Activated T-helper 2 cell treated with anti-CD3 and anti-CD28 coated beads, Interferon-gamma antibody, Interleukin-2, Interleukin-4, amounts not matched to agents 10 μg/mL and 5 μg/mL and 100 μg/mL, durations not matched to agents 14 hours and 24 hours and 36 hours (primary cell): ENCODE measurements at regions of chr10 and their contacts with region 1.

Region 1: DNA sequence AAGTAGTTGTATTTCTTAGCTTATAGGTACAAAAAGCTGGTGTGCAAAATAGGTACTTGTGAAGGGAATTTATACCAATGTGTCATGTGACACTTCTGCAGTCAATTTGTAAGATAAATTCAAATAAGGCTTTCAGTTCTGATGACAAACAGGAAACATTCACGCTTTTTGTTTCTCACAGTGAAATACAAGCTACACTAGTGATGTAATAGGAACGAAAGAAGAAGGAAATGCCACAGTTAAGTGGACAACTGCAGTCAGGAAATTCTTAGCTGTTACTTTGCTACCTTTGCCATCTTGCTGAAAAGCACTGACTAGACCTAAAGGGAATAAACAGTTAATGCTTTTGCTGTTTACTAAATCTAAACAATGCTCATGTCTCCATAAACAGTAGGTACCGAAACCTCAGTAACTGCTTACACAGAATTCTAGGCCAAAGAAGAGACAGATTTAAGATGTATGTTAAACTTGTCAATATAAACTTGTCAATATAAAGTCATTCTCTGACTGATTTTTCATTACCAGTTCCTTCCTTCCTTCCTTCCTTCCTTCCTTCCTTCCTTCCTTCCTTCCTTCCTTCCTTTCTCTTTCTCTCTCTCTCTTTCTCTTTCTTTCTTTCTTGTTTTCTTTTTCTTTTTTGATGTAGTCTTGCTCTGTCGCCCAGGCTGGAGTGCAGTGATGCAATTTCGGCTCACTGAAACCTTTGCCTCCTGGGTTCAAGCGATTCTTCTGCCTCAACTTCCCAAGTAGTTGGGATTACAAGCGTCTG is 10.1 kb downstream of the OTUD1 start:
- DNase-seq: no peak
- H3K4me3 Mint-ChIP-seq: no peak overlapping the region
- H3K27ac Mint-ChIP-seq: peak overlapping the region; percentile 74
- H3K4me1 Mint-ChIP-seq: peaks cover 33% of the 10 kb centered on the region
- H3K27me3 Mint-ChIP-seq: no peaks in the 10 kb centered on the region

Region 2: DNA sequence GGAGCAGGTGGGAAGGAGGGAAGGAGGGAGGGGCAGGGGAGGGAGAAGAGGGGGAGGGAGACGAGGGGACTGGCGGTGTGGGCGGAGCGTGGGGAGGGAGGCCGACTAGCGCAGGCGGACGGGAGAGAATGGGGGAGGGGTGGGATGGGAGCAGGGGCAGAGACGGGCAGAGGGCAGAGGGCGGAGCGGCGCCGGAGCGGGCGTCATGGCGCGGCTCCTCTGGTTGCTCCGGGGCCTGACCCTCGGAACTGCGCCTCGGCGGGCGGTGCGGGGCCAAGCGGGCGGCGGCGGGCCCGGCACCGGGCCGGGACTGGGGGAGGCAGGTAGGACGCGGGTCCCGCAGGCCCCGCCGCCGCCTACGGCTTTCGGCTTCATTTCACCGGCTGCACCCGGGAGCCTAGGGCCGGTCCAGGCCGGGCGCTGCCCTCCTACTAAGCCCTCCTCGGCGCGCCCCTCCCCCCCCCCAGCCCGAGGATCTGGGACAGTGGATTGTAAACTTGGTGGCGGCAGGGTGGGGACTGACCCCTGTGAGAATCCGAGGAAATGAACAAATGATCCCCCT is 353.5 kb before region 1 on chr10 and contains the start of gene MSRB2:
- intact Hi-C with region 1: loop called (anchors 2 kb)
- DNase-seq: peak; percentile 66
- H3K4me3 Mint-ChIP-seq: peak within 1 kb of the TSS; percentile 88
- H3K27ac Mint-ChIP-seq: peak within 1 kb of the TSS; percentile 83
- H3K4me1 Mint-ChIP-seq: peaks cover 41% of the 10 kb centered on the region
- H3K27me3 Mint-ChIP-seq: peaks cover 17% of the 10 kb centered on the region
- total RNA-seq, gene MSRB2: 4.0 and 4.4 TPM in 2 replicates

Region 3: DNA sequence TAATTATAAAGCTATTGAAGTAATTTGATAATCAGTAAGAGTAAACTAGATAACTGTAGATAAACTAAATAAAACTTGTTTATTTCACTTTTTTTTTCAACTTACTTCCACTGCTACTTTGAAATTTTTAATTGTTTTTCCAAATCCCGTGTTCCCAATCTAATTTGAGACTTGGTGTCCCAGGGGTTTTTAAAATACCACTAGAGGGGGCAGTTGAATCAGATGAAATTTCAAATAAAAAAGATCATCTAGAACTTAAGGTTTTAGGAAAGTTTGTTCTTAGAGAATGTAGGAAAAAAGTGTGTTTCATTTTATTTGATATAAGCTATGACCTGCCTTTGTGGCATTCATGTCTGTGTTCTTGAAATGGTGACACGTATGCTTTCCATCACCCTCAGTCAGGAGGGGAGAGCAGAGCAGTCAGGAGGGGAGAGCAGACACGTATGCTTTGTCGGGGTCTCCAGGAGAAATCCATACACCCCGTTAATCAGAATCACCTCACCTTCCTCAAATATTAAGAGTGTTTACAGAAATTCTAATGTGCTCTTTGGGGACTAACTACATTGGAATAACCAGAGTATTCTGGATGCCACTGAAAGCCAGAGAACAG is 154.2 kb before region 1 on chr10:
- intact Hi-C with region 1: no loop called
- DNase-seq: no peak
- H3K4me3 Mint-ChIP-seq: no peak overlapping the region
- H3K27ac Mint-ChIP-seq: no peak overlapping the region
- H3K4me1 Mint-ChIP-seq: no peaks in the 10 kb centered on the region
- H3K27me3 Mint-ChIP-seq: peaks cover 12% of the 10 kb centered on the region

Region 4: DNA sequence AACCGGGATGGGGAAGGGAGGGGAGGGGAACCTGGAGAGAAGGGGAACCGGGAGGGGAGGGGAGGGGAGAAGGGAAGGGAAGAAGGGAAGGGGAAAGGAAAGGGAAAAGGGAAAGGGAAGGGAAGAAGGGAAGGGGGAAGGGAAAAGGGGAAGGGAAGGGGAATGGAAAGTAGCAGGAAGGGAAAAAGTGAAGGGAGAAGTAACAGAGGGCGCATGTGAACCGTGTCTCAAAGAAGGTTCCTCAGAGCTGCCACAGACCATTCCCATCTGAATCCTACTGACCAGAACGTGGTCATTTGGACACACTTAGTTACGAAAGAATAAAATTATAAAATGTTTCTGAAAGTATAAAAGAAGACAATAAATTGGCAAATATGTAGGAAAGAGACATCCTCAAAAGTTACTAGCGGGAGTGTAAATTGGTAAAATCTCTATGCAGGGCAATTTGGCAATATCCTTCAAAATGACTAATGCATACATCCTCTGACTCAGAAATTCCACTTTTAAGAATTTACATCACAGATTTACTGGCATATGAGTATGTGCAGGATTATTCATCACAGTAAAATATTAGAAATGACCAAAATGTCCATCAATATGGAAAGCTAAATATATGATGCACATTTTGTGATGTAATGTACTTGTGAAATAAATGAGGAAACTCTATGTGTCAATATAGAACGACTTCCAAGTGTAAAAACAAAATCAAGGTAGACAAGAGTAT is 117.3 kb before region 1 on chr10:
- intact Hi-C with region 1: loop called (anchors 5 kb)
- DNase-seq: no peak
- H3K4me3 Mint-ChIP-seq: no peak overlapping the region
- H3K27ac Mint-ChIP-seq: peak overlapping the region; percentile 49
- H3K4me1 Mint-ChIP-seq: peaks cover 17% of the 10 kb centered on the region
- H3K27me3 Mint-ChIP-seq: peaks cover 3% of the 10 kb centered on the region

Region 5: DNA sequence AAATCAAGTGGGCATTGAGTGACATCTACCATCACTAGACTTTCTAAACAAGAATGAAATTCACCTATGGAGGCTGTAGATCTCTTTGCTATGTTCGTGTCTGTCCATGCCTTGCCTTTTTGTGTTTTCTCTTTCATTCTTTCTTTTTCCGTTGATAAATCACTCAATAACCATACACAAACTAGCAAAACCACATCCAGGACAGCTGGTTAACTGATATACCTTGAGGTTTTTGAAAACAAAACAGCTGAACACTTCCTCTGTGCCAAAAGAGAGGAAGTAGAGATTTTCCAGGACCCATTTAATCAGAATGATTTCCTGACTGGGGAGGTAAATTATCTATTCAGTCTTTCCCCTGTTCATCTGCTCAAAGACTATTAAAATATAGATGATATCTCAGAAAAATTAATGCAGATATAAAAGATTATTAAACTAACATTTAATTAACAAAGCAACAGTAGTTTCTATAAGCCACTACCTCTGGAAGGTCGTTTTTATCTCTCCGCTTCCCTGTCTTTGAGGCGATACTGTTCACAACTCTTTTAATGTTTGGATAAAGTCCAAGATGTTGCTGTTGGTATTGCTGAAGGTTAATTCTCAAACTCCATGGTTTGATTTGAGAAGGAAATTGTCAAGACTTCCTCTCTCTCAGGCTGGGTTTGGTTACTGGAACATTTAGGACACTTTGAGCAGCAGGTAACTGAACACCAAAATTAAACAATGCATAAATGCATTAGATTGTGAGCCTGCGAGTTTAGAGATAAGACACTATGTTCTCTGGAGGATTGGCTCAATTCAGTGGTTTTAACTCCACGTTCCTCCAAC is 80.0 kb before region 1 on chr10:
- intact Hi-C with region 1: loop called (anchors 2 kb)
- DNase-seq: peak; percentile 16
- H3K4me3 Mint-ChIP-seq: peak overlapping the region; percentile 53
- H3K27ac Mint-ChIP-seq: peak overlapping the region; percentile 60
- H3K4me1 Mint-ChIP-seq: peaks cover 55% of the 10 kb centered on the region
- H3K27me3 Mint-ChIP-seq: no peaks in the 10 kb centered on the region

Region 6: DNA sequence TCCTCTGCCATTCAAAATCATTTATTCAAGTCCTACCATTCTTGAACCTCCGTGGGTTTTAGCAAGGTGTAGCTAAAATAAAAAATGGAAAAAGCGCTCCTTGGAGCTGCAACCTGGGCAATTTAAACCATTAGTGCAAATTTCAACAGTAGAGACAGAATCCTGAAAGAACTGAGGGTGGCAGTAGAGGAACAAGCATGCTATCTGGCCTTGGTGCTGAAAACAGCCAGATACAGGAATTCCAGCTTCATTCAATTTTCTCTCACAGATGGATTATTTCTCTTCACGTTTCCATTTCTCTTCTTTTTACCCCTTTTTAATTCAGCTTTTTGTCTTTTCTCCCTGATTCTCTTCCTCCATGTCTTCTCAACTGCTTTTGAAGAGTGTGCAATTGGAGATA is 67.5 kb after region 1 on chr10:
- intact Hi-C with region 1: loop called (anchors 5 kb)
- DNase-seq: no peak
- H3K4me3 Mint-ChIP-seq: no peak overlapping the region
- H3K27ac Mint-ChIP-seq: no peak overlapping the region
- H3K4me1 Mint-ChIP-seq: peaks cover 20% of the 10 kb centered on the region
- H3K27me3 Mint-ChIP-seq: peaks cover 25% of the 10 kb centered on the region

Region 7: GRCh38 chr10:23530079-23530478 is 81.1 kb after region 1 on chr10:
- intact Hi-C with region 1: loop called (anchors 5 kb)
- DNase-seq: no peak
- H3K4me3 Mint-ChIP-seq: no peak overlapping the region
- H3K27ac Mint-ChIP-seq: no peak overlapping the region
- H3K4me1 Mint-ChIP-seq: peaks cover 16% of the 10 kb centered on the region
- H3K27me3 Mint-ChIP-seq: no peaks in the 10 kb centered on the region